T-cell (primary cell): ENCODE measurements at regions of chr6 and their contacts with region 1.

Region 1: DNA sequence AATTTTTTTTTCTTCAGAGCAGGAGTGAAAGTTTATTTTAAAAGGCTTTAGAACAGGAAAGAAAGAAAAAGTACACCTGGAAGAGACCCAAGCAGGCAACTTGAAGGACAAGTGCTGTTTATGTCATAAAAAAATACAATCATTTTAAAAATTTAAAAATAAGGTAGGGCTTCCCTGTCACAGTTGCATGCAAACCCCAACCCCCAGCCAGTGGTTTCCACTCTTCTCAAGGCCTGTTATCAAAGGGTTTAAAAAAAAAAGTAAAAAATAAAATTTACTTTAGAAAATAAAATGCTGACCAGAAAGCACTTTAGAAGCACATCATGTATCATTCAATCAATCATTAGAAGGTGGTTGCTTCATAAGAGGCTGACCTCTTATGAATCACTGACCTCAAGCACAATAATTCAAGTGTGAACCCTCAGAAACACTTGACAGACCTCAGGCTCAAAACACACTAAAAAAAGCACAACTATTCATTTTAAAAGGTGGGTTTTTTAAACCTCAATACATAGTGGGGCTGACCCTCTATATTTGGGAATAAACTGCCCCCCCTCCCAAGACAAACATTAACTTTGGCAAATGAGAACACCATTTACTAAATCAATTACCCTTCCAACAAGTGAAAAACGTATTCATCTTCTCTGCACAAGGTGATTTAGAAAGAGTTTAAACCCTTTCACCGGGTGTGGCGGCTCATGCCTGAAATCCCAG is 15.6 kb downstream of the ILRUN start:
- DNase-seq: no peak
- ATAC-seq: no peak
- H3K4me3 ChIP-seq: no peak overlapping the region
- H3K4me3 Mint-ChIP-seq: no peak overlapping the region
- H3K27ac ChIP-seq: no peak overlapping the region
- H3K27ac Mint-ChIP-seq: peak overlapping the region in 1 of 2 donors; percentile 34
- H3K4me1 ChIP-seq: peaks cover 3 to 15% of the 10 kb centered on the region in 2 experiments
- H3K4me1 Mint-ChIP-seq: peaks cover 41 to 51% (median 45%) of the 10 kb centered on the region in 3 donors
- H3K27me3 ChIP-seq: no peaks in the 10 kb centered on the region
- H3K27me3 Mint-ChIP-seq: no peaks in the 10 kb centered on the region

Region 2: DNA sequence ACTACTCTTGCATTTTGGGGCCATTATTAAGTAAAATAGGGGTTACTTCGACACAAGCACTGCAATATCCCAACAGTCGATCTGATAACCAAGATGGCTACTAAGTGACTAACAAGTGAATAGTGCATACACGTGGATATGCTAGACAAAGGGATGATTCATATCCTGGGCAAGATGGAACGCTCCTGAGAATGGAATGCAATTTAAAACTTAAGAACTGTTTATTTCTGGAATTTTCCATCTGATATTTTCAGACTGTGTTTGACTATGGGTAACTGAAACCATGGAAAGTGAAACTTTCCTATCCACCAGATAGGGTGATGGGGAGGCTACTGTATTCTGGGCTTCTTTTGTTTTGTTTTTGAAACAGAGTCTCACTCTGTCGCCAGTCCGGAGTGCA is 50.9 kb before region 1 on chr6:
- CTCF ChIA-PET with region 1: no interaction called
- POLR2A ChIA-PET with region 1: no interaction called
- DNase-seq: no peak
- ATAC-seq: no peak
- H3K4me3 ChIP-seq: no peak overlapping the region
- H3K4me3 Mint-ChIP-seq: no peak overlapping the region
- H3K27ac ChIP-seq: no peak overlapping the region
- H3K27ac Mint-ChIP-seq: no peak overlapping the region
- H3K4me1 ChIP-seq: no peaks in the 10 kb centered on the region
- H3K4me1 Mint-ChIP-seq: peaks cover 9 to 19% (median 11%) of the 10 kb centered on the region in 3 donors
- H3K27me3 ChIP-seq: no peaks in the 10 kb centered on the region
- H3K27me3 Mint-ChIP-seq: no peaks in the 10 kb centered on the region

Region 3: DNA sequence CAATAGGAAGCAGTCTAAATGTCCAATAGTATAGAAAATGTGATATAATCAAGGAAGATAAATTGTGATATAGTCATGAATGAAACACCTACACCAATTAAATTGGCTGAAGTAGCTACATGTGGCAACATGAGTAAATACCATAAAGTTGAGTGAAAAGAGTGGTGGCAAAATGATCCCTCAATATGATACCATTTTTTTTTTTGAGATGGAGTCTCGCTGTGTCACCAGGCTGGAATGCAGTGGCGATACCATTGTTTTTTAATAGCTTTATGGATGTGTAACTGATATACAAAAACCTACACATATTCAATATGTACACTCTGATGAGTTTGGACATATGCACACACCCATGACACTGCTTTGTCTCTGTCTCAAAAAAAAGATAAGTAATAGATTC is 36.5 kb after region 1 on chr6:
- CTCF ChIA-PET with region 1: no interaction called
- POLR2A ChIA-PET with region 1: no interaction called
- DNase-seq: no peak
- ATAC-seq: no peak
- H3K4me3 ChIP-seq: no peak overlapping the region
- H3K4me3 Mint-ChIP-seq: no peak overlapping the region
- H3K27ac ChIP-seq: no peak overlapping the region
- H3K27ac Mint-ChIP-seq: no peak overlapping the region
- H3K4me1 ChIP-seq: no peaks in the 10 kb centered on the region
- H3K4me1 Mint-ChIP-seq: no peaks in the 10 kb centered on the region
- H3K27me3 ChIP-seq: no peaks in the 10 kb centered on the region
- H3K27me3 Mint-ChIP-seq: no peaks in the 10 kb centered on the region

Region 4: GRCh38 chr6:34791164-34791700 is 110.3 kb after region 1 on chr6:
- CTCF ChIA-PET with region 1: no interaction called
- POLR2A ChIA-PET with region 1: interaction called in 1 of 2 experiments, 10 read pairs
- DNase-seq: peak in 13 of 35 experiments; percentile 0 to 59 (median 13)
- ATAC-seq: peak; percentile 44 to 46 (median 45)
- H3K4me3 ChIP-seq: peak overlapping the region; percentile 79 to 83
- H3K4me3 Mint-ChIP-seq: peak overlapping the region; percentile 97 to 99 (median 98)
- H3K27ac ChIP-seq: peak overlapping the region; percentile 75
- H3K27ac Mint-ChIP-seq: peak overlapping the region; percentile 93 to 96
- H3K4me1 ChIP-seq: peaks cover 2 to 20% of the 10 kb centered on the region in 2 experiments
- H3K4me1 Mint-ChIP-seq: peaks cover 28 to 34% (median 31%) of the 10 kb centered on the region in 3 donors
- H3K27me3 ChIP-seq: no peaks in the 10 kb centered on the region
- H3K27me3 Mint-ChIP-seq: no peaks in the 10 kb centered on the region